ENCODE measurements at regions of chr7 and their contacts with region 1.

Region 1: GRCh38 chr7:117212969-117213877 is 109.6 kb downstream of the WNT2 start:
- DNase-seq: no peak
- ATAC-seq: peak; percentile 62
- H3K4me3 Mint-ChIP-seq: no peak overlapping the region
- H3K27ac Mint-ChIP-seq: no peak overlapping the region
- H3K4me1 Mint-ChIP-seq: no peaks in the 10 kb centered on the region
- H3K27me3 Mint-ChIP-seq: no peaks in the 10 kb centered on the region
- CTCF ChIP-seq: peak; percentile 36

Region 2: GRCh38 chr7:117385340-117386109 is 172.3 kb after region 1 on chr7:
- CTCF ChIA-PET with region 1: no interaction called
- POLR2A ChIA-PET with region 1: no interaction called
- intact Hi-C with region 1: loop called (anchors 2 kb)
- DNase-seq: no peak
- ATAC-seq: no peak
- H3K4me3 Mint-ChIP-seq: no peak overlapping the region
- H3K27ac Mint-ChIP-seq: no peak overlapping the region
- H3K4me1 Mint-ChIP-seq: no peaks in the 10 kb centered on the region
- H3K27me3 Mint-ChIP-seq: no peaks in the 10 kb centered on the region
- CTCF ChIP-seq: no peak

Region 3: DNA sequence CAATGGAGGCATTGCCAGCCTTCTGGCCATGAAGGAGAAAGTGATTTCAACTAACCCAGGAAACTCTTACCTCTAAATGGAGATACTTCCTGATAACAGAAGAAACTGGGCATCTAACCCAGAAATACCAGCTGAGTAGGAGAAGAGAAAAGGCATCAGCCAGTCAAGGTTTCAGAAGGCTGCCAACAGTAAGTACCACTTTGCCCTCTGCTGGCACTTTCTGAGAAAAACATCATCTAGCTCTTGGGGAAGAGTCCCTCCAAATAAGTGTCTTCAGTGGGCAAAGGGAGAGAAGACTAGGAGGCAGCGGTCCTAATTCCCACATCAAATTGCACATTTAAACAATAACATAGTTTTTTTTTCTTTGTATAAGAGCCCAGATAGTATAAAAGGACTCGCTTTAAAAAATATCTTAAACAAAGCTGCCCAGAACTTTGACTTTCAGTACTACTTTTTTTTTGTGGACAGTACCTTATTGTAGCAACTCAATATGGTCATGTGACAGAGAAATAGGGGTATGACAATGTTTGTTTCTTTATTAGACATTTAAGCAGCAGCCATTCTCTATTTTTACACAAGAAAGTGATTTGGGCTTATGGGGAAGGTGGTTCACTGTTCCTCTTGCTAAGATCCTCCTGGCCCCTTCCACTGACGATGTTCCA is 502.7 kb after region 1 on chr7:
- CTCF ChIA-PET with region 1: no interaction called
- POLR2A ChIA-PET with region 1: no interaction called
- intact Hi-C with region 1: loop called (anchors 5 kb)
- DNase-seq: no peak
- ATAC-seq: no peak
- H3K4me3 Mint-ChIP-seq: no peak overlapping the region
- H3K27ac Mint-ChIP-seq: no peak overlapping the region
- H3K4me1 Mint-ChIP-seq: no peaks in the 10 kb centered on the region
- H3K27me3 Mint-ChIP-seq: peaks cover 4% of the 10 kb centered on the region
- CTCF ChIP-seq: no peak

Region 4: DNA sequence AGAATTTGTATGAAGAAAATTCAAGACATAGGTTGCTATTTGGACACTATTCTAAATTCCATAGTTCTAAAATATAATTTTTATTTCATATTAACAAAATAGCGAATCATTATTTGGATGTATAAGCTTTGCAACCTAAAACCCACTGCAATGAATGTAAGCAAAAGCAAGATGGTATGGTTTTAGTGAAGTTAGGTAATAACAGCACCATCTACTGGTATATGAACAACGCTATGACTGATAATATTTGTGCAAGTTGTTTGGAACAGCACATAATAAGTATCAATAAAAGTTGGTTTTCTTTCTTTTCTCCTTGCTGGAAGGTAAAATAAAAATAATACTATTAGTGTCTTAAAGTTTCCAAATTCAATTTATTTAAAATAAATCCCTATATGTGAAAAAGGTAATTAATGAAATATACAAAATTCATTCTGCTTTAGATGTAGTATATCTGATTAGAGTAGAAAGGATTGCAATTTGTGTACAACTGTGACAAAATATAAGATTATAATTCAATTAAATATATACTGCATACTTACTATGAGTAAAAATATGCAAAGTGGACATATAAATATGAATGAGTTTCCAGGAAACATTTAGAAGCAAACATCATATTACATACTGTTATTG is 891.7 kb after region 1 on chr7:
- CTCF ChIA-PET with region 1: no interaction called
- POLR2A ChIA-PET with region 1: no interaction called
- intact Hi-C with region 1: loop called (anchors 1 kb)
- DNase-seq: no peak
- ATAC-seq: no peak
- H3K4me3 Mint-ChIP-seq: no peak overlapping the region
- H3K27ac Mint-ChIP-seq: no peak overlapping the region
- H3K4me1 Mint-ChIP-seq: no peaks in the 10 kb centered on the region
- H3K27me3 Mint-ChIP-seq: no peaks in the 10 kb centered on the region
- CTCF ChIP-seq: no peak

Region 5: DNA sequence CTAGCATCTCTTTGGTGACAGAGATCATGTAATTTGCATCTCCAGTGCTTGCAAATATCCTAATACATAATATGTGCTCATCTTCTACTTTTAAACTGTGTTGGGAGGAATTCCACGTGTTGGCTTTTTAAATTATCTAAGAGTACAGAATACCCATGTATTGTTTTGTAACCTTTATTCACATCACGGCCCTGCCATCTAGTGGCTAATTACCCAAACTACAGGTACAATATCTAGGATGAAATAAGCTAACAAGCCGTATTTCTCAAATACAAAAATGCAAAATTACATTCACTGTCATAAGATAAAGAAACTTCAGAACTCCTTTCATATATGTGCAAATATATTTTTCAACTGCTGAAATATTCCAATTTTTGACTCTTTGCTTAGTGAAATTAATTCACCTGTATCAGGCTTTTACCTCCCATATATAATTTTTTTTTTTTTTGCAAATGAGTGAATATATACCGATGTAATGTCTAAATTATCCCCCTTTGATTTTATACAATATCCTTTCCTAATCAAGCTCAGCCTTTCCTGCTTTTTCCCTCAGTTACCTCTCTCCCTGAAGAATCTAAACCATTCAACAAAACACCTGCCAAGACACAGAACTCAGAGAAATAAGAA is 940.4 kb after region 1 on chr7:
- CTCF ChIA-PET with region 1: interaction called, 6 read pairs
- POLR2A ChIA-PET with region 1: no interaction called
- intact Hi-C with region 1: loop called (anchors 1 kb)
- DNase-seq: no peak
- ATAC-seq: peak; percentile 49
- H3K4me3 Mint-ChIP-seq: no peak overlapping the region
- H3K27ac Mint-ChIP-seq: no peak overlapping the region
- H3K4me1 Mint-ChIP-seq: no peaks in the 10 kb centered on the region
- H3K27me3 Mint-ChIP-seq: no peaks in the 10 kb centered on the region
- CTCF ChIP-seq: peak; percentile 71

Region 6: GRCh38 chr7:118195837-118196474 is 982.7 kb after region 1 on chr7:
- CTCF ChIA-PET with region 1: interaction called, 3 read pairs
- POLR2A ChIA-PET with region 1: no interaction called
- intact Hi-C with region 1: loop called (anchors 1 kb)
- DNase-seq: no peak
- ATAC-seq: peak; percentile 68
- H3K4me3 Mint-ChIP-seq: no peak overlapping the region
- H3K27ac Mint-ChIP-seq: no peak overlapping the region
- H3K4me1 Mint-ChIP-seq: peaks cover 2% of the 10 kb centered on the region
- H3K27me3 Mint-ChIP-seq: no peaks in the 10 kb centered on the region
- CTCF ChIP-seq: peak; percentile 90